ENCODE measurements at regions of chr7 and their contacts with region 1.

Region 1: DNA sequence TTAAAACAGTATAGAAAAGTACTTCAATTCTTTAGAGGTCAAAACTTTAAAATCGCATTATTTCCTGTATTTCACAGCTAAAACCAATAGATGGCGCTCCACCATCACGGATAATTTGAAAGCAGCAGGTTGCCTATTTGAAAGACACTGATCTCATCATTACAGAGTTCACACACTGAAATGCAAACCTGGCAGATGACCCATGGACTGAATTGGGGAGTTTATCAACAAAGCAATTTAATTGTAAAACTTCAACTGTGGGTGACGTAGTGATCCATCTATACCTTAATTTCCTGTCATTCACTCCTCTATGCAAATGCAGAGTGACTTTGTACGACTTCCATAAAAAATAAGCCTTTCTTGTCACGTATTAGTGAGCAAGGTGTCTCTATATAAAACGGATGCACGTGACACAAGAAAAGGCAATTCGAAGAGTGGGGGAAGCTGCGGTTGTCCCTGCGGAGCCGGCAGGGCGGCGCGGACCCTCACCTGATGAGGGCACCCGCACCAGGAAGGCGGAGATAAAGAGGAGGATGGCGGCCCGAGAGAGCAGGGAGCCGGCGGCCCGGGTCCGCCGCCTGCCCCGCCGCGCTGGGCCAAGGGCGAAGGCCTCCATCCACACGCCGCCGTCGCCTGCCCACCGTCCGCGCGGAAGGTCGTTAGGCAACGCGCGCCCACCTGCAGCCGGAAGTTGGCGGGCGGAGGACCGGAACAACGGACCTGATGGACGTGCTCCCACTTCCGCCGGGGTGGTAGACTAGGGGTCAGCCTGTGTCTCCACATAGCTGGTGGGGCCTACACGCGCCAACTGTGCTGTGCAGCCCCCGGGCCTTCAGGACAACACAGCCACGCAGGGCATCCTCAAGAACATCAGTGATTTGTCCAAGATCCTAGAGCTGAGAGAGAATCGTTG is at the start of gene ZPBP:
- DNase-seq: peak; percentile 52
- H3K4me3 Mint-ChIP-seq: no peak within 1 kb of the TSS
- H3K27ac Mint-ChIP-seq: no peak within 1 kb of the TSS
- H3K4me1 Mint-ChIP-seq: no peaks in the 10 kb centered on the region
- H3K27me3 Mint-ChIP-seq: peaks cover 60% of the 10 kb centered on the region
- CTCF ChIP-seq: peak; percentile 61
- total RNA-seq, gene ZPBP: not detected in 2 replicates

Region 2: DNA sequence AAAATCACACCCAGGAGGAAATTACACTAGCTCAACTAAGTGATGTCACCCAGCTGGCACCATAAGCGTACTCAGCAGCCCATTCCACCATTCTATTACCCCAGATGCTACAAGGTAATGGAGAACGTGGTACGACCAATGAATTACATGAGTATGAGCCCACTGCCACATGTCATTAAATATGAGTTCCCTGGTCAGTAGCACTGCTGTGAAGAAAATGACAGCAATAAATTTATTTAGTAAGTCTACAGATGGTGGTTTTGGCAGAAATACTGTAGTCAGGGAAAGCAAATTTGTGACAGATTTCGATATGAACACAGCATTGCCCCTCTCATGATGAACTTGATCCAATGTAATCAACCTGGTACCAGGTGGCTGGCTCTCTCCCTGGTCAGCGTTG is 165.2 kb before region 1 on chr7:
- CTCF ChIA-PET with region 1: no interaction called
- POLR2A ChIA-PET with region 1: no interaction called
- intact Hi-C with region 1: no loop called
- DNase-seq: no peak
- H3K4me3 Mint-ChIP-seq: no peak overlapping the region
- H3K27ac Mint-ChIP-seq: no peak overlapping the region
- H3K4me1 Mint-ChIP-seq: no peaks in the 10 kb centered on the region
- H3K27me3 Mint-ChIP-seq: peaks cover 14% of the 10 kb centered on the region
- CTCF ChIP-seq: no peak

Region 3: DNA sequence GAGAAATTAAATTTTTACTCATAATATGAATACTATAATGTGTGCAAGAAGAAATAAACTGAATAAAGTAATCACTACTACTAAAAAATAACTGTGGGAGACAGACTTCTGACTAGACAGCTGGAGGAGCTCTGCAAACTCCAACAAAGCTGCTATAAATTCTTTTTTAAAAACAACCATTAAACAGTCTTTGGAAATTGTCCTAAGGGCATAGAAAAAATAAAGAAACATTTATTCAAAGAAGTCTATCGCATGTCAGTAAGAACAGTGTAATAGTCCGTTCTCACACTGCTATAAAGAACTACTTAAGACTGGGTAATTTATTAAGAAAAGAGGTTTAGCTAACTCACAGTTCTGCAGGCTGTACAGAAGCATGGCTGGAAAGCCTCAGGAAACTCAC is 55.7 kb before region 1 on chr7:
- CTCF ChIA-PET with region 1: no interaction called
- POLR2A ChIA-PET with region 1: no interaction called
- intact Hi-C with region 1: no loop called
- DNase-seq: no peak
- H3K4me3 Mint-ChIP-seq: no peak overlapping the region
- H3K27ac Mint-ChIP-seq: no peak overlapping the region
- H3K4me1 Mint-ChIP-seq: no peaks in the 10 kb centered on the region
- H3K27me3 Mint-ChIP-seq: peaks cover 54% of the 10 kb centered on the region
- CTCF ChIP-seq: no peak

Region 4: DNA sequence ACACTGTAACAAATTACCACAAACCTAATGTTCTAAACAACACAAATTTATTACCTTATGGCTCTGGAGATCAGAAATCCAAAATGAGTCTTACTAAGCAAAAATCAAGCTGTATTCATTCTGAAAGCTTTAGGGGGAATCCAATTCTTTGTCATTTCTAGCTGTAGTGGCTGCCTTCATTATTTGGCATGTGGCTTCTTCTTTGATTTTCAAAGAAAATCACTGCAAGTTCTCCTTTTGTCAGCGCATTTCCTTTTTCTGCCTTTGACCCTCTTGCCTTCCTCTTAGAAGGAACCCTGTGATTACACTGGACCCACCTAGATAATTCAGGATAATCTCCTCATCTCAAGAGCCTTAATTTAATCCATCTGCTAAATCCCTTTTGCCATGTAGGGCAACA is 36.7 kb before region 1 on chr7:
- CTCF ChIA-PET with region 1: no interaction called
- POLR2A ChIA-PET with region 1: no interaction called
- intact Hi-C with region 1: no loop called
- DNase-seq: no peak
- H3K4me3 Mint-ChIP-seq: no peak overlapping the region
- H3K27ac Mint-ChIP-seq: no peak overlapping the region
- H3K4me1 Mint-ChIP-seq: no peaks in the 10 kb centered on the region
- H3K27me3 Mint-ChIP-seq: peaks cover 75% of the 10 kb centered on the region
- CTCF ChIP-seq: no peak

Region 5: GRCh38 chr7:50112250-50112975 is 19.6 kb after region 1 on chr7:
- CTCF ChIA-PET with region 1: interaction called, 18 read pairs
- POLR2A ChIA-PET with region 1: no interaction called
- intact Hi-C with region 1: no loop called
- DNase-seq: no peak
- H3K4me3 Mint-ChIP-seq: no peak overlapping the region
- H3K27ac Mint-ChIP-seq: no peak overlapping the region
- H3K4me1 Mint-ChIP-seq: no peaks in the 10 kb centered on the region
- H3K27me3 Mint-ChIP-seq: peaks cover 60% of the 10 kb centered on the region
- CTCF ChIP-seq: no peak

Region 6: GRCh38 chr7:50369143-50370026 is 276.6 kb after region 1 on chr7:
- CTCF ChIA-PET with region 1: no interaction called
- POLR2A ChIA-PET with region 1: no interaction called
- intact Hi-C with region 1: loop called (anchors 2 kb)
- DNase-seq: peak; percentile 43
- H3K4me3 Mint-ChIP-seq: no peak overlapping the region
- H3K27ac Mint-ChIP-seq: no peak overlapping the region
- H3K4me1 Mint-ChIP-seq: no peaks in the 10 kb centered on the region
- H3K27me3 Mint-ChIP-seq: peaks cover 51% of the 10 kb centered on the region
- CTCF ChIP-seq: peak; percentile 48

Region 7: DNA sequence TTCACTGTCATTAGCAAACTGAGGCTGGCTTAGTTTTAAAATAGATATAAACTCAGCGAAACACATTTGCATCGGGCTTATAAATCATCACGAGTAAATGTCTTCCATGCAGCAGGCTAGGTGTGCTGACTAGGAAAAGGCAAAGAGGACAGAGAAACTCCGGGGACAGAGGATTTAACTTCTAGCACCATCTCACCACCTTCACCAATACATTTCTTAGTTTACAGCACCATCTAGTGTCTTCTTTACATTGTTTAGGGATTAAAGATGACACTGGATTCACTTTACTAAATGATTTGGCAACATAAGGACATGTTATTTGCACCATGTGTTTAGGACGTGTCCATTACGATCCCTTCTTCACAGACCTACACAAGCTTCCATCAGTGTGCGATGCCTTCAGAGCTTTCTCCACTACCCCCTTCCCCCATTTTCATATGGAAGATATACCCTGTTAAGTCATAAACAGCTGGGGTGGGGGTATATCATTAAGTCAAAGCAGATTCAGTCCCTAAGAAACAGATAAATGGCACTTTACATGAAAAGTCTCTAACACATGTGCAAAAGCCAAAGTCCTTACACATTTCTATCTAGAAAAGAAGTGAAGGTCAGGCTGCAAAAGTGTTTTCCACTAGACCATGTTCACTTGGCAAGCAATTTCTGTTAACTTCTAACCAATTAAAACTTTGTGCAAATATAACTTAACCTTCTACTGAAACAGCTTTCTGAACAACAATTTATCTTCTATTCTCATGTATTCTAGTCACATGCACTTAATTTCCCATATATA is 586.6 kb after region 1 on chr7:
- CTCF ChIA-PET with region 1: no interaction called
- POLR2A ChIA-PET with region 1: no interaction called
- intact Hi-C with region 1: loop called (anchors 5 kb)
- DNase-seq: peak; percentile 58
- H3K4me3 Mint-ChIP-seq: no peak overlapping the region
- H3K27ac Mint-ChIP-seq: no peak overlapping the region
- H3K4me1 Mint-ChIP-seq: peaks cover 6% of the 10 kb centered on the region
- H3K27me3 Mint-ChIP-seq: no peaks in the 10 kb centered on the region
- CTCF ChIP-seq: peak; percentile 40